ENCODE measurements at regions of chr9 and their contacts with region 1.

Region 1: DNA sequence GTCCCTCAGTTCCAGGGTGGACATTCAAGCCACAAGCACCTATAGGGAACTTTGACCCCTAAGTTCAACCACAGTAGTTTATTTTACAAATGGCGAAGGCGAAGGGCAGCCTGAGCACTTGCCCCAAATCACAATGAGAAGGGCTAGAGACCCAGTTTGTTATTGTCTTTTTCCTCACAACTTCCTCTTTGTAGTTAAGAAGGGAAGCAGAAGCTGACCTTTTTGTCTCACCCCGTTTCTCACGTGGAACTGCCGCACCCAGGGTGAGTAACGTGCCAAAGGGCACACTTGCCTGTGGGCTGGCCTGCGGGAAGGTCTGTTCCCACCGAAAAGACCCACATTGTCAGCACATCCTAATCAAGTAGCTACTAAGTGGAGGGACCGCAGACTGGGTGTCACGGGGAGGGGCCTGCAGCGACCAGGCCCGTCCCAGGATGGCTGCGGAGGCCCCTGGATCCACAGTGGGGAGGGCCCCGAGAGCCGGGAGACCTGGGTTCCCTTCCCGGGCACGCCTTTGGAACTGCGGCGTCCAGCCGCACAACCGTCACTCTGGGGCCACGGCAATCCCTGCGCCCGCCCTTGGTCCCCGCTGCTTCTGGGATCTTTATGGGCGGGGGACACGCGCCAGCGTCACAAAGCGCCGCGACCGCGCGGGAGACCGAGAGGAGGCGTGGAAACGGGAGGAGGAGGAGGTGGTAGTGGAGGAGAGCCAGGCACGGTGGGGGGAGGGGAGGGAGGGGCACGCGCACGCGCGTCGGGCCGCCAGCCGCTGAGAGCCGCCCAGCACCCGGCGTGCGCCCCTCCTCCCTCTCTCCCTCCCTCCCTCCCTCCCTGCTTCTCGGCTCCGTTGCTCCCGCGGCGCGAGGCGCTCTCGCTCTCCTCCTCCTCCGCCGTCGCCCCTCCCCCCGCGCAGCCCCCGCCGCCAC is at the start of gene UBE2R2:
- DNase-seq: peak; percentile 96
- H3K4me3 Mint-ChIP-seq: peak within 1 kb of the TSS; percentile 82
- H3K27ac Mint-ChIP-seq: peak within 1 kb of the TSS; percentile 93
- H3K4me1 Mint-ChIP-seq: peaks cover 51% of the 10 kb centered on the region
- H3K27me3 Mint-ChIP-seq: no peaks in the 10 kb centered on the region
- total RNA-seq, gene UBE2R2: 42.3 to 43.9 TPM

Region 2: DNA sequence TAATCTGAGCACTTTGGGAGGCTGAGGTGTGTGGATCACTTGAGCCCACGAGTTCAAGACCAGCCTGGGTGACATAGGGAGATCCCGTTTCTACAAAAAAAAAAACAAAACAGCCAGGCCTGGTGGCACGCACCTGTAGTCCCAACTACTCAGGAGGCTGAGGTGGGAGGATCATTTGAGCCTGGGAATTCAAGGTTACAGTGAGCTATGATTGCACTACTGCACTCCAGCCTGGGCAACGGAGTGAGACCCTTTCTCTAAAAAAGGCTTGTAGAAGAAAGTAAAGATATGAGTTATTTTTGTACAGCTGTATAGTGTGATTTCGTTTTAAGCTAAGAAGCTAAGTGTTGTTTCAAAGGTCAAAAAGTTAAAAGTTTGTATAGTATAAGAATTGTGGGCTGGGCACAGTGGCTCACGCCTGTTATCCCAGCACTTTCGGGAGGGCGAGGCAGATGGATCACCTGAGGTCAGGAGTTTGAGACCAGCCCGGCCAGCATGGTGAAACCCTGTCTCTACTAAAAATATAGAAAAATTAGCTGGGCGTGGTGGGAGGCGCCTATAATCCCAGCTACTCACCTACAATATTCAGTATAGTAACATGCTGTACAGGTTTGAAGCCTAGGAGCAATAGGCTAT is 19.2 kb after region 1 on chr9:
- CTCF ChIA-PET with region 1: interaction called, 21 read pairs
- POLR2A ChIA-PET with region 1: interaction called, 9 read pairs
- intact Hi-C with region 1: loop called (anchors 1 kb)
- DNase-seq: no peak
- H3K4me3 Mint-ChIP-seq: no peak overlapping the region
- H3K27ac Mint-ChIP-seq: peak overlapping the region; percentile 45
- H3K4me1 Mint-ChIP-seq: peaks cover 42% of the 10 kb centered on the region
- H3K27me3 Mint-ChIP-seq: no peaks in the 10 kb centered on the region

Region 3: DNA sequence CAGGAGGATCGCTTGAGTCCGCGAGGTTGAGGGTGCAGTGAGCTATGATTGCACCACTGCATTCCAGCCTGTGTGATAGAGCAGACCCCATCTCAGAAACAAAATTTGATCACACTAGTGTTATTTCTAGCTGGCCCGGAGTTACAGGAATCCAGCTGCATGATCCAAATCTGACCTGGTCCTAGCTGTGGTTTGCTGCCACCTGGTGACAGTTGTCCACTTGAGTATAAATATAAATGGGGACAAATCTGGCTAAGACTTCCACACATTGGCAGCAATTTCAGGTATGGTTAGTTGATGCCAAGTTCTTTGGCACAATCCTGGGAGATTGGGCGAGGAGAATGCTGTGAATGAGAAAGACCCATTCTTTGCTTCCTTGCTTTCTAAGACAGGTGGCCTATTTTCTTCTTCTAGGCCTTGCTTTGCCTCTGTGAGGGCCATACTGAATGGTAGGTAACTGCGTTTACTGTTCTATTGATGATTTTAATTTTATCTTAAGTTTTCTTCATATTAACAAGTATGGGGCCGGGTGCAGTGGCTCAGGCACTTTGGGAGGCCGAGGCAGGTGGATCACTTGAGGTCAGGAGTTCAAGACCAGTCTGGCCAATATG is 35.7 kb after region 1 on chr9:
- CTCF ChIA-PET with region 1: interaction called, 97 read pairs
- POLR2A ChIA-PET with region 1: interaction called, 3 read pairs
- intact Hi-C with region 1: loop called (anchors 1 kb)
- DNase-seq: peak; percentile 61
- H3K4me3 Mint-ChIP-seq: no peak overlapping the region
- H3K27ac Mint-ChIP-seq: no peak overlapping the region
- H3K4me1 Mint-ChIP-seq: peaks cover 43% of the 10 kb centered on the region
- H3K27me3 Mint-ChIP-seq: no peaks in the 10 kb centered on the region

Region 4: GRCh38 chr9:33924978-33925797 is 108.6 kb after region 1 on chr9:
- CTCF ChIA-PET with region 1: interaction called, 31 read pairs
- POLR2A ChIA-PET with region 1: interaction called, 3 read pairs
- intact Hi-C with region 1: loop called (anchors 5 kb)
- DNase-seq: peak; percentile 35
- H3K4me3 Mint-ChIP-seq: no peak overlapping the region
- H3K27ac Mint-ChIP-seq: no peak overlapping the region
- H3K4me1 Mint-ChIP-seq: no peaks in the 10 kb centered on the region
- H3K27me3 Mint-ChIP-seq: no peaks in the 10 kb centered on the region

Region 5: GRCh38 chr9:34072868-34073590 is 256.4 kb after region 1 on chr9:
- CTCF ChIA-PET with region 1: interaction called, 24 read pairs
- POLR2A ChIA-PET with region 1: no interaction called
- intact Hi-C with region 1: loop called (anchors 2 kb)
- DNase-seq: no peak
- H3K4me3 Mint-ChIP-seq: no peak overlapping the region
- H3K27ac Mint-ChIP-seq: no peak overlapping the region
- H3K4me1 Mint-ChIP-seq: no peaks in the 10 kb centered on the region
- H3K27me3 Mint-ChIP-seq: no peaks in the 10 kb centered on the region

Region 6: DNA sequence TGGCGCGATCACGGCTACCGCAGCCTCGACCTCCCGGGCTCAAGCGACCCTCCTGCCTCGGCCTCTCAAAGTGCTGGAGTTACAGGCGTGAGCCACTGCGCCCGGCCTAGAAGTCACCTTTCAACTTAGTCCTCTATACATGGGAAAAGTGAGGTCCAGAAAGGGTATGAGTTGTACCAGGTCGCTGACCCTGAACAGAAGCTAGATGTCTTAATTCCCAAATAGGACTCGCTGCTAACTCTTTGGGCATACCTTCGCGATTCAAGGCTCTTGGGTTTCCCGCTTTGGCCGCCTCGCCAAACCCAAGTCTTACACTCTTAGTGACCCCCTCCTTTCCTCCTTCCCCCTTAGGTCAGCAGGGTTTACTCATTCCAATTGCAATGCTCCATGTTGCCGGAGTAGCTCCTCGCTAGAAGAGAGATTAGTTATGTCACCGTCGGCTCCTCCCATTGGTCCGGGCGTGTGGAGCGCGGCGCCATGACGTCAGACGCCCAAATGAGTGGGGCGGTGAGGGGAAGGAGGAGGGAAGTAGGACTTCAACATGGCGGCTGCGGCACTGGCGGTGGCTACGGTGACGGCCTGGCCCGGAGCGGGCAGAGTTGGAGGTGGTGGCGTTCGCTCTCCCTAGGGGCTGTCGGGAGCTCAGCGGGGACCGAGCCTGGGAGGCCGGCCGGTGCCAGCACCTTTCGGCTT is 362.1 kb after region 1 on chr9 and contains the start of gene UBAP1:
- CTCF ChIA-PET with region 1: no interaction called
- POLR2A ChIA-PET with region 1: no interaction called
- intact Hi-C with region 1: loop called (anchors 2 kb)
- DNase-seq: peak; percentile 98
- H3K4me3 Mint-ChIP-seq: peak within 1 kb of the TSS; percentile 90
- H3K27ac Mint-ChIP-seq: peak within 1 kb of the TSS; percentile 96
- H3K4me1 Mint-ChIP-seq: peaks cover 12% of the 10 kb centered on the region
- H3K27me3 Mint-ChIP-seq: no peaks in the 10 kb centered on the region
- total RNA-seq, gene UBAP1: 30.5 to 32.0 TPM

Region 7: DNA sequence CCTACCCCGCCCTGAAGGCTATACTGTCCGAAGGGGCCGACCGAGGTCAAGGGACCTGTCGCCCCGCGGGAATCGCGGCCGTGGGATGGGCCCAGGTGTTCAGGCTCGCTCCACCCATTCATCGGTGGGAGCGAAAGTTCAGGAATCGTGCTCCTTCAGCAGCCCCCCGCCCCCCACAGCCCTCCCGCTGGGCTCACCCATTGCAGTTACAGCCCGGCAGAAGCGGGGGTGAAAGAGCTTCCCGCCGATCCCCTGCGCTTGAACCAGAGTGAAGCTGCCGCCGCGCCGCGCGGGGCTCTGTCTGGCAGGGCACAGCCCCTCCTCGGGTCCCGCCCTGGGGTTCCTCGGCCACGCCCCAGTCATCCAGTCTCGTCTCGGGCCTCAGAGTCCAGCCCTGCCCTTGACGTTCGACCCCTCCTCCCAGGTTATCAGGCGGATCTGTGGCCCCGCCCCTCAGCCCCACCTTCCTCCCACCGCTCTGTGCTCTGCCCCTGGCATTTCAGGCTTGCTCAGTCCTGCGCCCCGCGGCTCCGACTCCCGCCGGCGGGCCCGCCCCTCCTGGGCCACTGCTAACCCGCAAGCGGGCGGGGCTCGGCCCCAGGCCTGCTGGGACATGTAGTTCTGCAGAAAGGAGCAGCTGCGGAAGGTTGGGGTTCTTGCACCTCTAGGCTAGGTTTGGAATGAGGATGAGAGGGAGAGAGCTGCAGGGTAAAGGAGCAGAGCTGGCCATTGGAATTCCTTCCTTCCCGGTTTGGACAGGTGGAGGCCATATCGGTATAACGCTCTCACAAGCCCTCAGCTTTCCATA is 560.2 kb after region 1 on chr9 and contains the start of gene MYORG:
- CTCF ChIA-PET with region 1: interaction called, 4 read pairs
- POLR2A ChIA-PET with region 1: no interaction called
- intact Hi-C with region 1: loop called (anchors 2 kb)
- DNase-seq: peak; percentile 99
- H3K4me3 Mint-ChIP-seq: peak within 1 kb of the TSS; percentile 78
- H3K27ac Mint-ChIP-seq: no peak within 1 kb of the TSS
- H3K4me1 Mint-ChIP-seq: peaks cover 30% of the 10 kb centered on the region
- H3K27me3 Mint-ChIP-seq: no peaks in the 10 kb centered on the region
- total RNA-seq, gene MYORG: 1.9 to 2.9 TPM

Measured in activated CD4-positive, alpha-beta memory T cell treated with anti-CD3 and anti-CD28 coated beads for 36 hours (primary cell).